PC-9 (cell line): ENCODE measurements at regions of chr5 and their contacts with region 1.

Region 1: DNA sequence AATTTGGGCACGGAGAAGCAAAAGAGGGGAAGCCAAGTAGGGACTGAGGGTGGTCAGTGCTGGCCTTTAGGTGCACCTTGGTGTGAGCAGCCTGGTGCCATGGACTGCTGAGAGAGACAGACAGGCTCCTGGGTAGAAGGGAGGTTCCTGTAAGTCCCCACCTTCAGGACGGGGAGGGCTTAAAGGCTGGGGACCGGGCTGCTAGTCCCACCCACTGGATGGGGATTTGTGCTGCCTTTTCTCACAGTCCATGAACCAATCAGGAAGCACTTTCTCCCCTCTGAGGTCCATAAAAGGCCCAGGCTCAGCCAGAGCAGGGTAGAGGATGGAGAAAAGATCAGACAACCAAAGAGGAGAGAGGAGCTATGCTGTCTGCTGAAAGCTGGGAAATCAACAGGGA is 15.2 kb downstream of the CDC25C start:
- DNase-seq: no peak
- H3K4me3 ChIP-seq: no peak overlapping the region
- H3K27ac ChIP-seq: no peak overlapping the region
- H3K4me1 ChIP-seq: no peaks in the 10 kb centered on the region
- H3K27me3 ChIP-seq: no peaks in the 10 kb centered on the region
- CTCF ChIP-seq: no peak

Region 2: GRCh38 chr5:138408023-138408422 is 91.7 kb after region 1 on chr5:
- CTCF ChIA-PET with region 1: no interaction called
- POLR2A ChIA-PET with region 1: no interaction called
- intact Hi-C with region 1: loop called (anchors 10 kb)
- DNase-seq: no peak
- H3K4me3 ChIP-seq: no peak overlapping the region
- H3K27ac ChIP-seq: no peak overlapping the region
- H3K4me1 ChIP-seq: no peaks in the 10 kb centered on the region
- H3K27me3 ChIP-seq: no peaks in the 10 kb centered on the region
- CTCF ChIP-seq: no peak